Natural killer cell (primary cell): ENCODE measurements at regions of chr18 and their contacts with region 1.

Region 1: DNA sequence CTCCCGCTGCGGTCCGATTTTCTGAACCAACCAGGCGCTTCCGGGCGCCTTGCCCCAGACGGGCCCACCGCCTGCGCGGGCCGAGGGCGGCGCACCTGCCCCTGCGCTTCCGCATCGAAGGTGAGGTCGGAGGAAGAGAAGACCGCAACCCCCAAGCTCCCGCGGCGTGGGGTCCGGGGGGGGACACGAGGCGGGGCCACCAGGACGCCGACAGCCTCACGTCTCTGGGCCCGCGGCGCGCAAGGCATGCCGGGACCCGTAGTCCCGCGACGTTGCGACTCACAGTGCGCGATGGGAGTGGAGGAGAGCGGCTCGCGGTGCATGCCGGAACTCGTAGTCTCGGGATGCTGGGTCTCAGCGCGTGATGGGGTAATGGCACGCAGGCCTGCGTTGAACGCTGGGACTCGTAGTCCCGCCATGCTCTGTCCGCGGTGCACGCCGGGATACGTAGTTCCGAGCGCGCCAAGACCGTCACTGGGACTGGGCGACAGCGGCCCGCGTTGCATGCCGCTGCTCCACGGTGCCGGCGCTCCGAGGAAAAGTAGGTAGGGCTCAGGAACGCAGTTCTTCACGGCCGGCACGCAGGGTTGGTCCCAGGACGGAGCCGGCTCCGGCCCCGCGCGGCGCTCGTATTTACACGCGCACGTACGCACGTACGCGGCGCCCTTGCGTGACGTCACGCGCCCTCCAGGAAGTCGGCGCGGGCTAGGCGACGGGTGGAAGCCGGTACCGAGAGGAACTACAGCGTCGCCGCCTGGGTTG is at the start of gene CTDP1:
- DNase-seq: peak; percentile 98 to 99
- ATAC-seq: peak; percentile 86 to 95 (median 86)
- H3K4me3 ChIP-seq: peak within 1 kb of the TSS; percentile 100
- H3K4me3 Mint-ChIP-seq: peak within 1 kb of the TSS; percentile 91
- H3K27ac ChIP-seq: peak within 1 kb of the TSS; percentile 100
- H3K27ac Mint-ChIP-seq: peak within 1 kb of the TSS; percentile 96 to 99
- H3K4me1 ChIP-seq: peaks cover 48% of the 10 kb centered on the region
- H3K4me1 Mint-ChIP-seq: peaks cover 46 to 51% of the 10 kb centered on the region in 2 donors
- H3K27me3 ChIP-seq: no peaks in the 10 kb centered on the region
- H3K27me3 Mint-ChIP-seq: no peaks in the 10 kb centered on the region
- CTCF ChIP-seq: no peak
- total RNA-seq, gene CTDP1: 66.9 to 89.4 (median 77.1) TPM

Region 2: DNA sequence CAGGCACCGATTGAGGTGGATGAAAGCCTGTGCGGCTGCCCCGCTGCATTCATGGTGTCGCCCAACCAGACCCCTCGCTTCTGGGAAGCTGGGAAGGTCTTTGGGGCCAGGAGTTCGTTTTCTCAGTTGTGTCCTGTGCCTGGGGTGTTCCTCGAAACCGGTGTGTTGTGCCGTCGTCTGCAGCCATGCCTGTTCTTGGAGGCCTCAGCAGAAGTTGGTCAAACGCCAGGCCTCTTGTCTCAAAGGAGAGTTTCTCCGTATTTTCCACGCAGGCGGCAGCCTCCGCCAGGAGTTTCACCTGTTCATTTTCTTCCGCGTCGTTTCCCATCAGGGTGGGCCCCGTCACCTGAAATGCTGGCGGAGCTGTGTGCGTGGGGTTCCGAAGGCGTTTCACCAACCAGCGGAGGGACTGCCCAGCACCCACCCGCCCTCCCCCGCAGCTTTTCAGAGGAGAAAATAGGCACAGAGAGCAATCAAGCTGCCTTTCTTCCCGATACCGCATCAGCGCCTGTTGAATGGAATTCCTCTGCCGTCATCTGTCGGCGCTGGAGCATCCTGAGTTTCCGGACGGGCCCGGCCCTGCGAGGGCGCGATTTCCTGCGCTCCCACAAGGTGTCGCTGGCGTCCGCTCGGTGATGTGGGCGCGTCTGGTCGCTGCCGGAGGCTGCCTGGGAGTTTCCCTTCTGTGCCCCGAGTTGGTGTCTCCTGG is 300.6 kb before region 1 on chr18:
- intact Hi-C with region 1: loop called (anchors 1 kb)
- DNase-seq: peak; percentile 75 to 92
- ATAC-seq: peak; percentile 85 to 98 (median 94)
- H3K4me3 ChIP-seq: no peak overlapping the region
- H3K4me3 Mint-ChIP-seq: no peak overlapping the region
- H3K27ac ChIP-seq: no peak overlapping the region
- H3K27ac Mint-ChIP-seq: peak overlapping the region; percentile 41 to 66
- H3K4me1 ChIP-seq: peaks cover 8% of the 10 kb centered on the region
- H3K4me1 Mint-ChIP-seq: peaks cover 5 to 7% of the 10 kb centered on the region in 2 donors
- H3K27me3 ChIP-seq: no peaks in the 10 kb centered on the region
- H3K27me3 Mint-ChIP-seq: no peaks in the 10 kb centered on the region
- CTCF ChIP-seq: peak; percentile 93

Region 3: DNA sequence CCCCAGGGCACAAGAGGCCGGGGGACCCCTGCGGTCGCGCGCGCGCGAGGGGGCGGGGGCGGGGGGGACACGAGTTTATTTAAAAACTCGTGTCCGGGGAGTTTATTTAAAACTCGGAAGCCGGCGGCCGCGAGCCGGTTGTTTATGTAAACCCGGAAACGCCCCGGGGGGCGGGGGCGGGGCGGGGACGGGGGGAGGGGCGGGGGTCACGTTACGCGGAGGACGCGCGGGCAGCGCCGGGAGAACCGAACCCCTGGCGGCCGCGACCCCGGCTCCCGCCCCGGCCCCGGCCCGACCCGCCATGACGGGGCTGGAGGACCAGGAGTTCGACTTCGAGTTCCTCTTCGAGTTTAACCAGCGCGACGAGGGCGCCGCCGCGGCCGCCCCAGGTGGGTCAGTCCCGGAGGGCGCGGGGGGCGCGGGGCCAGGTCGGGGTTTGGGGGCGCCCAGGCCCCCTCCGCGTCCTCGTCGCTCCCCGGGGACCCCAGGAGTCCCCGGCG is 279.2 kb before region 1 on chr18:
- intact Hi-C with region 1: loop called (anchors 2 kb)
- DNase-seq: peak; percentile 53 to 75
- ATAC-seq: peak; percentile 41 to 68 (median 68)
- H3K4me3 ChIP-seq: peak overlapping the region; percentile 54
- H3K4me3 Mint-ChIP-seq: no peak overlapping the region
- H3K27ac ChIP-seq: peak overlapping the region; percentile 62
- H3K27ac Mint-ChIP-seq: no peak overlapping the region
- H3K4me1 ChIP-seq: peaks cover 69% of the 10 kb centered on the region
- H3K4me1 Mint-ChIP-seq: peaks cover 44 to 58% of the 10 kb centered on the region in 2 donors
- H3K27me3 ChIP-seq: peaks cover 8% of the 10 kb centered on the region
- H3K27me3 Mint-ChIP-seq: no peaks in the 10 kb centered on the region
- CTCF ChIP-seq: no peak